Activated naive CD4-positive, alpha-beta T cell treated with anti-CD3 and anti-CD28 coated beads for 36 hours (primary cell): ENCODE measurements at regions of chr14 and their contacts with region 1.

Region 1: GRCh38 chr14:31420319-31421111 is at the start of gene HEATR5A:
- DNase-seq: peak; percentile 90
- H3K4me3 Mint-ChIP-seq: peak within 1 kb of the TSS; percentile 91
- H3K27ac Mint-ChIP-seq: peak within 1 kb of the TSS; percentile 82
- H3K4me1 Mint-ChIP-seq: peaks cover 17% of the 10 kb centered on the region
- H3K27me3 Mint-ChIP-seq: no peaks in the 10 kb centered on the region
- total RNA-seq, gene HEATR5A: 3.5 to 6.0 TPM

Region 2: DNA sequence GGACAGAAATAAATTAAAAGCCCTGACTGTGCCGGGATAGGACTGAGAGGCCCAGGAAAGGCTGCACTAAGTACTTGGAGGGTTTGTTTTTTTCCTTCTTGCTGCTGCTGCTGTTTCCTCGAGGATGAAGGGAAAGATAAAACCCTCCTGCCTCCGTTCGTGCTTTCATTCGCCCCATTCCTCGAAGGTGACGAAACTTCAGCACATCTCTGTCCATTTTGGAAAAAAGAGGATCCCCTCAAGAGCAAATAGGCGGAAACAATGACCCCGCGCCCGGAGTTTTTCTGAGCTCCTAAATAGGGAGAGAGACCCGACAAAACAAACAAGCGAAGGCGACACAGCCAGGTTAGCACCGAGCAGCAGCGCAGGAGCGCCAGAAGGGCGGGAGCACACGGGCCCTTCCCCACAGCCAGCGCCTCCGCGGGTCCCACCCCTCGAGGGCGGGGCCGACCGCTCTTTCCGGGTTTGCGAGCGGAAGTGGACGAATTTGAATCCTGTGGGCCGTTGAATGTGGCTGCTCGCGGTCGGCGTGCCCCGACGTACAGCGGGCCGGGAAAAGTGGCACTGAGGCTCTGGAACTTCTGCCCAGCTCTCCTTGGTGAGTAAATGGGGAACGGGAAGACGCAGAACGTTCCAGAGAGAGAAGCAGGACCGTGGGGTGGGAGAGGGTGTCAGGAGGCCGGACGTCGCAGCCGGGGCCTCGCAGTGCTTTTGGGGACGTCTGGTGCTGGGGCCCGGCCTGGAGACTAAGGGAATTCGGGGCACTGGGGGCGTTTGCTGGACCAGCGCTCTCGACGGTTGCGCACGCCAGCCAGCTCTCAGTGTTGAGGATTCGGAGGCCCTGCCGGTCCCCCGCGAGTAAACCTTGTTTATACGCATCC is 861.6 kb before region 1 on chr14 and contains the start of gene G2E3:
- CTCF ChIA-PET with region 1: no interaction called
- intact Hi-C with region 1: loop called (anchors 10 kb)
- DNase-seq: peak; percentile 92
- H3K4me3 Mint-ChIP-seq: peak within 1 kb of the TSS; percentile 100
- H3K27ac Mint-ChIP-seq: peak within 1 kb of the TSS; percentile 99
- H3K4me1 Mint-ChIP-seq: peaks cover 30% of the 10 kb centered on the region
- H3K27me3 Mint-ChIP-seq: no peaks in the 10 kb centered on the region
- total RNA-seq, gene G2E3: 28.6 to 29.1 TPM

Region 3: GRCh38 chr14:31388687-31389413 is 31.7 kb before region 1 on chr14:
- CTCF ChIA-PET with region 1: interaction called, 3 read pairs
- intact Hi-C with region 1: loop called (anchors 1 kb)
- DNase-seq: peak; percentile 17
- H3K4me3 Mint-ChIP-seq: no peak overlapping the region
- H3K27ac Mint-ChIP-seq: no peak overlapping the region
- H3K4me1 Mint-ChIP-seq: peaks cover 25% of the 10 kb centered on the region
- H3K27me3 Mint-ChIP-seq: no peaks in the 10 kb centered on the region

Region 4: GRCh38 chr14:31449971-31450610 is 29.6 kb after region 1 on chr14:
- CTCF ChIA-PET with region 1: interaction called, 12 read pairs
- intact Hi-C with region 1: no loop called
- DNase-seq: no peak
- H3K4me3 Mint-ChIP-seq: no peak overlapping the region
- H3K27ac Mint-ChIP-seq: no peak overlapping the region
- H3K4me1 Mint-ChIP-seq: peaks cover 7% of the 10 kb centered on the region
- H3K27me3 Mint-ChIP-seq: no peaks in the 10 kb centered on the region

Region 5: GRCh38 chr14:31561155-31561846 is 140.8 kb after region 1 on chr14 and contains the start of gene NUBPL:
- CTCF ChIA-PET with region 1: no interaction called
- intact Hi-C with region 1: loop called (anchors 1 kb)
- DNase-seq: peak; percentile 98
- H3K4me3 Mint-ChIP-seq: peak within 1 kb of the TSS; percentile 96
- H3K27ac Mint-ChIP-seq: peak within 1 kb of the TSS; percentile 92
- H3K4me1 Mint-ChIP-seq: peaks cover 23% of the 10 kb centered on the region
- H3K27me3 Mint-ChIP-seq: no peaks in the 10 kb centered on the region
- total RNA-seq, gene NUBPL: 11.5 to 13.5 TPM